Left ventricle myocardium superior (tissue), 1 donor: ENCODE measurements at regions of chr1 and their contacts with region 1.

Region 1: GRCh38 chr1:147890177-147890790 is 12.3 kb upstream of the GJA8 start:
- DNase-seq: peak; percentile 84
- ATAC-seq: peak; percentile 91

Region 2: GRCh38 chr1:147494998-147495580 is 395.2 kb before region 1 on chr1:
- intact Hi-C with region 1: loop called (anchors 10 kb)
- DNase-seq: peak; percentile 76
- ATAC-seq: peak; percentile 96

Region 3: GRCh38 chr1:147640553-147641165 is 249.6 kb before region 1 on chr1:
- intact Hi-C with region 1: loop called (anchors 10 kb)
- DNase-seq: peak; percentile 64
- ATAC-seq: peak; percentile 96

Region 4: GRCh38 chr1:147723691-147724323 is 166.5 kb before region 1 on chr1:
- intact Hi-C with region 1: loop called (anchors 2 kb)
- DNase-seq: peak; percentile 54
- ATAC-seq: peak; percentile 94

Region 5: GRCh38 chr1:147771231-147772125 is 118.8 kb before region 1 on chr1:
- intact Hi-C with region 1: no loop called
- DNase-seq: peak; percentile 84
- ATAC-seq: peak; percentile 98